Activated T-helper 1 cell treated with anti-CD3 and anti-CD28 coated beads, Interleukin-12 subunit alpha, Interleukin-12 subunit beta, Interleukin-2, Interleukin-4 antibody, amounts not matched to agents 30 ng/mL and 10 ng/mL and 1 ng/mL, durations not matched to agents 14 hours and 24 hours and 36 hours (primary cell): ENCODE measurements at regions of chr2 and their contacts with region 1.

Region 1: GRCh38 chr2:168751104-168751740 is 51.2 kb upstream of the NOSTRIN start:
- DNase-seq: peak; percentile 12
- H3K4me3 Mint-ChIP-seq: peak overlapping the region; percentile 24
- H3K27ac Mint-ChIP-seq: peak overlapping the region; percentile 42
- H3K4me1 Mint-ChIP-seq: peaks cover 50% of the 10 kb centered on the region
- H3K27me3 Mint-ChIP-seq: no peaks in the 10 kb centered on the region

Region 2: DNA sequence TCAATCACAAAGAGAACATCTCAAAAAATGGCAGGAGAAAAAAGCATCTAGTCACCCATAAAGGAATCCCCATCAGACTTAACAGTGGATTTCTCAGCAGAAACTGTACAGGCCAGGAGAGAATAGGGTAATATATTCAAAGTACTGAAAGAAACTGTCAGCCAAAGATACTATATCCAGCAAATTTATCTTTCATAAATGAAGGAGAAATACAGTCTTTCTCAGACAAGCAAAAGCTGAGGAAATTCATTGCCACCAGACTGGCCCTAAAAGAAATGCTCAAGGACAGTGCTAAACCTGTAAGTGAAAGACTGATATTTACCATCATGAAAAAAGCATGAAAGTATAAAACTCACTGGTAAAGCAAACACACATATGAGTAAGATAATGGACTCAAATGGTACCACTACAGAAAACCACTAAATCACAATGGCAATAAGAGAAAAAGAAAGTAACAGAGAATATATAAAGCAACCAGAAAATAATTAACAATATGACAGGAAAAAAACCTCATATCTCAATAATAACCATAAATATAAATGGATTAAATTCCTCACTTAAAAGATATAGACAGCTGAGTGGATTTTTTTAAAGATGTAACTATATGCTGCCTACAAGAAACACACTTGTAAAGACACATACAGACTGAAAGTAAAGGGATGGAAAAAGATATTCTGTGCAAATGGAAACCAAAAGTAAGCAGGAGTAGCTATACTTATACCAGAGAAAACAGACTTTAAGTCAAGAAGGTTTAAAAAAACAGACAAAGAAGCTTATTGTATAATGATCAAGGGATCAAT is 420.4 kb before region 1 on chr2:
- intact Hi-C with region 1: loop called (anchors 1 kb)
- DNase-seq: no peak
- H3K4me3 Mint-ChIP-seq: no peak overlapping the region
- H3K27ac Mint-ChIP-seq: no peak overlapping the region
- H3K4me1 Mint-ChIP-seq: peaks cover 10% of the 10 kb centered on the region
- H3K27me3 Mint-ChIP-seq: peaks cover 2% of the 10 kb centered on the region

Region 3: DNA sequence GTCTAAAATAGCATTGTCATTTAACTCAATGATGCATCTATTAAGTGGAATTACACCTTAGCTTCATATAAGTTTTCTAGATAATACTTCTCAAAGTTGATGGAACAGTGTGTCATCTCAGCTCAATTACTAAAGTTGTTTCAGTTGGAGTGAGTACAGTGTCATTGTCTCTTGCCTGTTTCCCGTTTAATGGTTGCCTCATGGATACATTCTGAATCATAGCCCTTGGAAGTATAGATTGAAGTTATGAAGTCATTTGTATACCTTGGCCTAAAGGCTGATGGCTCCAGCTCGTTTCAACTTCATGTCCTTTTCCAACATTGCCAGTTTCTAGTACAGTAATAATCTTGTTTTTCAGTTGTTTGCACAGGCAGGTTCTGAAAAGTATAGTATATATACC is 79.3 kb before region 1 on chr2:
- intact Hi-C with region 1: no loop called
- DNase-seq: no peak
- H3K4me3 Mint-ChIP-seq: no peak overlapping the region
- H3K27ac Mint-ChIP-seq: no peak overlapping the region
- H3K4me1 Mint-ChIP-seq: peaks cover 18% of the 10 kb centered on the region
- H3K27me3 Mint-ChIP-seq: no peaks in the 10 kb centered on the region

Region 4: DNA sequence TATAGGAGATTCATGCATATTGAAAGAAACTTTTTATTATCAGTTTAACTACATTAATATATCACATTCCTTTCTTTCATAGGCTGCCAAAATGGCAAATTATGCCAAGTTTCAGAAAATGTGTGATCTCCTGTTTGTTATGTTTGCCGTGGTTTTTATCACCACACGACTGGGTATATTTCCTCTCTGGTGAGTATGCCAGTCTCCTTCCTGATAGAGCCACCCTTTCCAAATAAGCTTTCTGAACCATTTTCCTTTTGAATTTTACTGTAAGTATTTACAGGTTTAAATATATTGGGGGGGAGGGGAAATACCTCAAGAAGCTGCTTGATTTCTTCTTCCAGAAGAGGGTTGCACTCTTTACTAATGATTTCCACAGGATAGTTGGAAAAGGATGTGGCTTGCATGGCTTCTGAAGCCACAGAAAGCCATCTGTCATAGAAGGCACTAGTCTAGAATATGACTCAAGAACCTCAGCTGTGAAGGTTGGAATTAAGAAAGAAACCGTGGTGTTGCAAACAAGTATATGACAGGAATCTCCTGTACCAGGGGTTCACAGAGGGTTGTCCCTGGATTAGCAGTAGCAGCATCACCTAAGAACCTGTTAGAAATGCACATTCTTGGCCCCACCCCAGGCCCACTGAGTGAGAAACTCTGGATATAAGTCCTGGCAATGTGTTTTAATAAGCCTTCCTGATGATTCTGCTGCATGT is 33.3 kb before region 1 on chr2:
- intact Hi-C with region 1: loop called (anchors 2 kb)
- DNase-seq: no peak
- H3K4me3 Mint-ChIP-seq: no peak overlapping the region
- H3K27ac Mint-ChIP-seq: no peak overlapping the region
- H3K4me1 Mint-ChIP-seq: peaks cover 19% of the 10 kb centered on the region
- H3K27me3 Mint-ChIP-seq: no peaks in the 10 kb centered on the region